Right ventricle myocardium inferior (tissue), 1 donor: ENCODE measurements at regions of chr14 and their contacts with region 1.

Region 1: GRCh38 chr14:68248481-68249255 is 429.1 kb downstream of the RAD51B start:
- DNase-seq: peak; percentile 52
- ATAC-seq: peak; percentile 62

Region 2: GRCh38 chr14:68043752-68044151 is 204.9 kb before region 1 on chr14:
- intact Hi-C with region 1: loop called (anchors 2 kb)
- DNase-seq: no peak
- ATAC-seq: no peak

Region 3: GRCh38 chr14:68408680-68409079 is 160.0 kb after region 1 on chr14:
- intact Hi-C with region 1: loop called (anchors 10 kb)
- DNase-seq: no peak
- ATAC-seq: no peak

Region 4: GRCh38 chr14:68719634-68720384 is 471.1 kb after region 1 on chr14:
- intact Hi-C with region 1: loop called (anchors 10 kb)
- DNase-seq: no peak
- ATAC-seq: no peak

Region 5: DNA sequence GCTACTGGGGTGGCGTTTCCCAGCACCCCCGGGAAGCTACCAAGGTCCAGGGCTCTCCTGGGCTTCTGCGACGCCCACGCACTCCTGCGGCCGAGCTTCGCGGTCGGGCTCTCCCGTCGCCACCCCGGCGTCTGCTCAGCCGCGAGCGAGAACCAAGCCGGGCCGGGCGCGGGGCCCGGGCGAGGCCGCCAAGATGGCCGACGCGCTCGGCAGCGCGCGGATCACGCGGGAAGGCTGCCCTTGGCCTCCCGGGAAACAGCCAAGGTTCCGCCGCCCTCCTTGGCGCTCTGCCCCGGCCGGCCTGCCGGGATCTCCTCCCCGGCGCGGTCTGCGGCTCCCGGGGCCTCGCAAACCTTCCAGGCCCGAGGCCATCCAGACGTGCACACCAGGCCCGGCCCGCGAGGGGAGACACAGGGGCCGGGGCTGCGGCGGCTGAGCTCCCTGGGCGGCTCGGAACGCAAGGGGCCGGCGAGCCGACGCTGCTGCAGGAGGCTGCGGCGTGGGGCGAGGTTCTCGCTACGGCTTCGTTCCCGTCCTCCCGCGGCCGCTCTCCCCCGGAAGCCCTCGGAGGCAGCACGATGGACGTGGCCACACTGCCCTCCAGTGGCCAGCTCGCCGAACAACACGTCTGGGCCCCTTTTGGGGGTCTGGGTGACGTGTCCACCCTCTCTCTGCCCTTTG is 567.7 kb after region 1 on chr14:
- intact Hi-C with region 1: loop called (anchors 1 kb)
- DNase-seq: peak; percentile 96
- ATAC-seq: peak; percentile 94